Right ventricle myocardium inferior (tissue), 1 donor: ENCODE measurements at regions of chr12 and their contacts with region 1.

Region 1: DNA sequence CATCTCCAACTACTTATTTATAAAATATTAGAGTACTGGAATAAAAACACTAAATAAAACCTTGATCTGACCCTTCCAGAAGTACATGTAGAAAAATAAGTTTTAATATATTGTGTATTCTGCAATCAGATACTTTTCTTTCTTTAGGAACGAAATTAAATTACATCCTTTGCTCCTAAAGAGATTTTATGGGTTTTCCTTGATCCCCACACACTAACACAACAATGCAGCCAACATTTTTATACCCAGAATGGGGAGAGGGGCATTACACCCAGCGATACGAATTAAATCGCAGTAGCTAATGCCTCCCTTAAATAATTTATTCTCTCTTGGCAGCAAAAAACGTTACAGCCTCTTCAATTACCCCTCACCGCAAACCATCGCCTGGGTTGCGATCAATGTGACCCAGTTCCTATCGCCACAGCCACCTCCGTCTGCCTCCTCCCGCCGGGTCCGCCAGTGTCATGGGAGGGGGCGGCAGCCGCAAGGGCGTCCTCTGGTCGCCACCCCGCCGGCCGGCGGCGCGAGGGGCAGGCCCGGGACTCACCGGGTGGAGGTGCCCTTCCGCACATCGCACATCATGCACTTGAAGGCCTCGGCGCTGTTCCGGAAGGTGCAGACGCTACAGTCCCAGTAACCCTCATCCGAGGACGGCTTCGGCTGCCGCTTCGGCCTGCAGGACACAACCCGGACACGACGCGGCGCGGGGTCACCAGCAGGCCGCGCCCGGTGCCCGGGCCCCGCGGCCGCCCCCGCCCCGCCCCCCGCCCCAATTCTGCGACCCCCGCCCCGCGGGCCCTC is 796 bp downstream of the YAF2 start:
- DNase-seq: peak; percentile 87
- ATAC-seq: peak; percentile 67

Region 2: DNA sequence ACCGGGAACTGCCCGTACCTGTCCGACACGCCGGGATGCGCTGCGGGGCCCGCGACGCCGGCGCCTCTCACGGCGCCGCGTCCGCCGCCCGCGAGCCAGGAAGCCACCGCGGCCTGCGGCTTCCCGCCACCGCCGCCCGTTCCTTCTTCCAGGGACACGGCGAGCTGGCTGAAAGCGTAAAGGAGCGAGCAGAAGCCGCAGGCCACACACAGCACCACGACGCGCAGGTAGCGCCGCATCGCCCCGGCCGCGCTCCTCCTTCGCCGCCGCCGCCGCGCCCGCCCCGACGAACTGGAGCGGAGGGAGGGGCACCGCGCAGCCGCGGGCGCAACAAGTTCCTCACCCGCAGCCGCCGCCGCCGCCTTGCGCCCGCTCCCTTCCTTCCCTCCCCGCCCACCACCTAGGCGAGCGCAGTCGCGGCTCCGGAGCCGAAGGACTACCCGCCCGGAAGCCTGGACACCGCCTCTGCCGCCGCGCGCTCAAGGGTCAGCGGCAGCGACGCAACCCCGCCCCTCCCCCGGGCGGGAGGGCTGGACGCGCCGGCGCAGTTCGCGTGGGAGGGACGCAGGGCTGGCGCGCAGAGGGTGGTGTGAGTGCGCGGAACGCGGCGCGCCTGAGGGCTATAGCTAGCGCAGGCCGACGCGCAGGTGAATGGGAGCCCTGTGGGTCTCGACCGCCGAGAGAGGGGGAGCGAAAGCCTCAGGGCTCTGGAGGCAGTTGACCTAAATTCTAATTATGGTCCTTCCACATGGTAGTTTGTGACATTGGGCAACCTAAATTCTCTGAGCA is 92.7 kb before region 1 on chr12 and contains the start of gene GXYLT1:
- intact Hi-C with region 1: loop called (anchors 2 kb)
- DNase-seq: peak; percentile 96
- ATAC-seq: peak; percentile 99
- total RNA-seq, gene GXYLT1: 4.8 TPM

Region 3: DNA sequence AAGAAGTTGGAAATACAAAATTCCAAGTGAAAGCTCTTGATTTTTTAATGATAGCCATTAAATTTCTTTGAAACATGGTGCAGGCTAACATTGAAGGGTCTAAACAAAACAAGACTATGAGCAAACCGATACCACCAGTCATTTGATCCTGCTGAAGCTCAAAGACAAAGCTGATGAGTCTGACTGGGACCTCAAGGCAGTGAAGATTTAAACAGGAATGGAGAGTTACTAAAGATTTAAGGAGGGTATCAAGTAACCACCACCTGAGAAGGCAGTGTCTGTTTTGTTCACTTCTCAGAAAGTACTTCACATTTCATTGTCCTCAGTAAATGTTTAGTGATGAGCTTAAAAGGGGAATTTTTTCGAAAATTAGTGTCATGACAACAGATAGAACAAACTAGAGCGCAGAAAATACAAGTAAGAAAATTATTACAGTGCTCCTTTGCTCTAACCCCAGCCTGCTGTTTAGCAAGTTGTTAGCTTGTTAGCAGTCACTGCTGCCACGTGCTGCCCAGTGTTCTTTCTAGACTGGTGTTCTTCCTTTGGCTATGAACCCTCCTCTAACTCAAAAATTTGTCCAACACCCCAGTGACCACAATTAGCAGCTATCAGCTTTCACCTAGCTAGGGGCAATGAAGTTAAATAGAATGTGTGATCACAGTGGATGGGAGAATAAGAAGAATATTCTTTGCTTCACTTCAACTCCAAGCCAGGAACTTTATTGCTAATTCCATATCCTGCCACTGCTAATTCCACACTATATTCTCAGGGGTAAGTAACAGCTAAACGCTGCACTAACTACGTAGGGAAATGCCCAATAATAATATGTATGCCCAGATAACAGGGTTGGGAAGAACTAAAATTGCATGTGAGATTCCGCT is 40.3 kb before region 1 on chr12:
- intact Hi-C with region 1: loop called (anchors 5 kb)
- DNase-seq: no peak
- ATAC-seq: no peak

Region 4: DNA sequence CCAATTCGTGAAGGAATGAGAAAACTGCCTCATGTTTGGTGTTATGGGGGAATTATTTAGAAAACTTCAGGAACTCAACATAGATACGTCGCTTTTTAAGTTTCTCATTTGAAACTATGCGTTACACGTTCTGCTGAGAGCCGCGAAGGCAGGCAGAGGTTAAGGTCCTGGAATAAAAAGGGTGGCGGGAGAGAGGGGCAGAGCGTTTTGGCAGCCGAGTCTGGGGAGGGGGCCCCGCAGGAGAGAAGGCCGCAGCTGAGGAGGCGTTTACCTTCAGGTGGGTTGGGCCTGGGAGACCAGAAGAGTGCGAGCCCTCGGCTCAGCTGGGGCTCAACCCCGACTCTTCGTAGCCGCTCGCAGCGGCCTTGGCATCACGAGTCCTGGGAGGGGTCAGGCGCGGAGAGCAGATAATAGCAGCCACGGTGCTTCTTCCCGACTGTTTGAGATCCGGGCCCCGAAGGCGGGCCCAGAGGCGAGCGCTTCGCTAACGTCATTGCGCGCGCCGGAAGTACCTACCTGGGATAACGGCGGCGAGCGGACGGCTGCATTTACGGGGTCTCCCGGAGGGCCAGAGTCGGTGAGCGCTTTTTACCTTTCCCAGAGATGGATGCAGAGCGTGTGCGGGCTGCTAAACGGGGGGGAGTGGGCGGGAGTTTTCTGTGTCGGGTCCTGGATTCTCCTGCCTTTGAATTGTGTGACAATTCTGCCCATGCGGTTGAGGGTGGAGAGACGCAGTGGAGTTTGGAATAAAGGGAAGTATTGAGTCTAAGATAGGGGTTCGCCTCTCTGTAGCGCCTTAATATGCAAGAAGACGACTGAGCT is 88.6 kb after region 1 on chr12 and contains the starts of genes PPHLN1 and ZCRB1:
- intact Hi-C with region 1: loop called (anchors 2 kb)
- DNase-seq: peak; percentile 93
- ATAC-seq: peak; percentile 98
- total RNA-seq, gene PPHLN1: 27.3 TPM
- total RNA-seq, gene ZCRB1: 54.0 TPM

Region 5: GRCh38 chr12:42382013-42382680 is 144.9 kb after region 1 on chr12:
- intact Hi-C with region 1: no loop called
- DNase-seq: no peak
- ATAC-seq: no peak